Activated T-helper 2 cell treated with anti-CD3 and anti-CD28 coated beads, Interferon-gamma antibody, Interleukin-2, Interleukin-4, amounts not matched to agents 10 μg/mL and 5 μg/mL and 100 μg/mL, durations not matched to agents 14 hours and 24 hours and 36 hours (primary cell): ENCODE measurements at regions of chr14 and their contacts with region 1.

Region 1: GRCh38 chr14:89276424-89276975 is 140.5 kb downstream of the FOXN3 start:
- DNase-seq: peak; percentile 66
- H3K4me3 Mint-ChIP-seq: peak overlapping the region; percentile 77
- H3K27ac Mint-ChIP-seq: peak overlapping the region; percentile 99
- H3K4me1 Mint-ChIP-seq: peaks cover 83% of the 10 kb centered on the region
- H3K27me3 Mint-ChIP-seq: no peaks in the 10 kb centered on the region

Region 2: GRCh38 chr14:89221109-89221810 is 55.2 kb before region 1 on chr14:
- intact Hi-C with region 1: loop called (anchors 5 kb)
- DNase-seq: no peak
- H3K4me3 Mint-ChIP-seq: no peak overlapping the region
- H3K27ac Mint-ChIP-seq: peak overlapping the region; percentile 19
- H3K4me1 Mint-ChIP-seq: peaks cover 26% of the 10 kb centered on the region
- H3K27me3 Mint-ChIP-seq: no peaks in the 10 kb centered on the region

Region 3: DNA sequence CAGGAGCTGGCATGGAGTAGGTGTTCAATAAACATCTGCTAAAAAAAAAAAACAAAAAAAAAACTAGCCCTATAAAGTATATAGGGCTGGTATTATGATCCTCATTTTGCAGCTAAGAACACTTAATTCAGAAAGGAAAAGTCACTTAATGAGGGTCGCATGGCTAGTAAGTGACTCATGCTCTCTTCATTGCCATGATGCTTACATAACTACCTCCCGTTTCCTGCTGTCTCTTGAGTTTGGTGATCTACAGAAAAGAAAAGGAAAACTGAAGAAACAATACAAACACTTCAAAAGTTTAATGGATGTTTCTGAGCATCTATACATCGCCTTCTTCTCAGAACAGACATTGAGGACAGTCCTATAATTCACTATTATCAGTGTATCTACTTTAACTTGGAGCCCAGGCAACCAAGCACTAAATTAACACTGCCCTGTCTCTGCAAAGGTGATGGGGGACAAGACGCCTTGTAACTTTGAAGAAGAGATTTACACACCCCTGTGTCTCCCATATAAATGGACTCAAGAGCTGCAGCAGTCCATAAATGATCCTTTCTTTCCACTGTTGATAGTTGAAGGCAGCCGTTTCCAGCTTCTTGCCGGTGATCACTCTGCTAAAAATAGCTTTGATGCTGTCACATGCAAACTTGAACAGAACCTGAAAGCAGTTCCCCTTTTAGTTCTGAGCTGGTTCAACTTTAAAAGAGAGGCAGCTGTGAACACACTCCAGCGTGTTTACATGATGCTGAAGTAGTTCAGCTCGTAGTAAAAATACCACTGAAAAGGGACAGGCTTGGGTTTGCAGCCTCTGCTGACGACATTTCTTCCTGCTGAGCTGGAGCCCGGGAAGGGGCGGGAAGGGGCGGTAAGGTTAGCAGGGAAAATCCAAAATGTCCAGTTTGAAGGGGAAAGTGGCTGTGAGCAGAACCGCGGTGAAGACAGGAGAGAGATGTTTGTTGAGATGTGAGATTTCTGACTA is 27.2 kb after region 1 on chr14:
- intact Hi-C with region 1: loop called (anchors 2 kb)
- DNase-seq: no peak
- H3K4me3 Mint-ChIP-seq: peak overlapping the region; percentile 63
- H3K27ac Mint-ChIP-seq: peak overlapping the region; percentile 95
- H3K4me1 Mint-ChIP-seq: peaks cover 45% of the 10 kb centered on the region
- H3K27me3 Mint-ChIP-seq: no peaks in the 10 kb centered on the region

Region 4: DNA sequence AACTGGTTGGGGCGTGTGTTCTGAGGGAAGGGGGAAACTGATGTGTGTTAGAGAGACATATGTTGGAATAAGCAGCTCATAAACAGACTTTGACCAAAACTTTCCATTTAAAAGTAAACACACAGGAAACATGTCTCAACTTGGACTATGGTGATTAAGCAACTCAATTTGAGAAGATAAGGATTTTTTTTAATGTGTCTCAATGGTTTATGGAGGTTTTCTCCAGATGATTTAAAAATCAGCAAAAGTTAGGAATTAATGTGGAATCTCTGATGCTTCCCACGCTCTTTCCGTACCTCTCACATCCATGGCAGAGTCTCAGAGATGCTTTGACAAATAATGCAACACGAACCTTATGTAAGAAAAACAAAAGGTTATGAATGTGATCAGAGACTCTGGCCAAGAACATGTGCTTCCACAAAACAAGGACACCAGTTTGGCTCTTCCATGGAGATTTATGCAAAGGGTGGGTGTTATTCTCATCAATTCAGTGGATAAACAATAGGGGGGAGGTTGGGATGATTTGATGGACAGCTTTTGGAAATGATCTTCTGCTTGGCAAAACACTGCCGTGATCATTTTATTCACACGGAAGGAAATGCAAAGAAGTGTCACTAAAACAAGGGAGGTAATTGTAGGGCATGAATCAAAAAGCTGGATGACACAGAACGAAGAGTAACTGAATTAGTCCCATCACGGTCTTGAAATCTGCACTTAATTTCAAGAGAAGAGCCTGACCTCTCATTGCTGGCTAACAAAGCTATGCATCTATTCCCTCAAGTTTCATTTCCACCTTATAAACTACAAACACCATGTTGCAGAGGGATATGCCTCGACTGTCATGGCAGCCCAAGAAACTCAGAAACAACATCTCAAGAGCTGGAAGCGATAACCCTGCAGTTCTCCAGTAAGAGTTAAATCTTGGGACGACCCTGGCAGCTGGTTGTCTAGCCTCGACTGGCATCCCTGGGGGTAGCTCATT is 64.0 kb after region 1 on chr14:
- intact Hi-C with region 1: loop called (anchors 1 kb)
- DNase-seq: no peak
- H3K4me3 Mint-ChIP-seq: no peak overlapping the region
- H3K27ac Mint-ChIP-seq: peak overlapping the region; percentile 63
- H3K4me1 Mint-ChIP-seq: peaks cover 39% of the 10 kb centered on the region
- H3K27me3 Mint-ChIP-seq: no peaks in the 10 kb centered on the region

Region 5: GRCh38 chr14:89365061-89365801 is 88.7 kb after region 1 on chr14:
- intact Hi-C with region 1: loop called (anchors 1 kb)
- DNase-seq: peak; percentile 37
- H3K4me3 Mint-ChIP-seq: peak overlapping the region; percentile 71
- H3K27ac Mint-ChIP-seq: peak overlapping the region; percentile 93
- H3K4me1 Mint-ChIP-seq: peaks cover 49% of the 10 kb centered on the region
- H3K27me3 Mint-ChIP-seq: no peaks in the 10 kb centered on the region

Region 6: DNA sequence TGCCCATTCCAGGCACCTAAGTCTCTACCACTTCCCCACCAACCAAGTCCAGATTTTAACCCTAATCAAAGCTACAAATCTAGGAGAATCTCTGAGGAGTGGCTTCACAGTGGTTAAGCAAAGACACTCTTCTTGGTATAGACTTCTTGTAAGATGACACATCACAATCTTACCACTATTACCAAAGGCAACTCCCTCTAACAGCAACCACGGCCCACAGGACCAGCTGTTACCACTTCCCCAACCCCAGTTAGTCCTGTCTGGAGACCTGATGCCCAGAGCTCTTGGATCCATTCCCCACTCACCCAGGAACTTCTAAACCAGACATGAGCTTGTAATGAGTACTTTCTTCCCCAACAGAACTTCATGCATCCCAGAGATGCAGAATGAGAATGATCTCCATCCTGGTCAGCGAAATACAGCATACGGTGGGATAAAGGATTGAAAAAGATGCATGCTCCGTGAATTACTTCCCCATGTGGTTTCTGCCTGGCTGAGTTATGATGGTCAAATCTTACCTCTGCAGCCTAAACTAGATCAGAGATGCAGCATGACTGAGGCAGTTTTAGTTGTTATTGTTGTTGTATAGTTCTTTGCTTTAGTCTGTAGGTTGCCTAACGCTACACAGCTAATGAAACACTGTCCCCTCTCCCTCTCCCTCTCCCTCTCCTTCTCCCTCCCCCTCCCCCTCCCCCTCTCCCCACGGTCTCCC is 228.3 kb after region 1 on chr14:
- intact Hi-C with region 1: loop called (anchors 10 kb)
- DNase-seq: no peak
- H3K4me3 Mint-ChIP-seq: no peak overlapping the region
- H3K27ac Mint-ChIP-seq: peak overlapping the region; percentile 51
- H3K4me1 Mint-ChIP-seq: peaks cover 43% of the 10 kb centered on the region
- H3K27me3 Mint-ChIP-seq: no peaks in the 10 kb centered on the region

Region 7: GRCh38 chr14:89641495-89642175 is 365.1 kb after region 1 on chr14:
- intact Hi-C with region 1: loop called (anchors 5 kb)
- DNase-seq: peak; percentile 42
- H3K4me3 Mint-ChIP-seq: peak overlapping the region; percentile 50
- H3K27ac Mint-ChIP-seq: peak overlapping the region; percentile 93
- H3K4me1 Mint-ChIP-seq: peaks cover 65% of the 10 kb centered on the region
- H3K27me3 Mint-ChIP-seq: no peaks in the 10 kb centered on the region